PC-3 (cell line): ENCODE measurements at regions of chr2 and their contacts with region 1.

Region 1: GRCh38 chr2:179410552-179411356 is 146.1 kb upstream of the SESTD1 start:
- DNase-seq: peak; percentile 80
- ATAC-seq: peak; percentile 69
- H3K4me3 ChIP-seq: no peak overlapping the region
- H3K27ac ChIP-seq: no peak overlapping the region
- H3K4me1 ChIP-seq: peaks cover 10% of the 10 kb centered on the region; the same call in 1 of the 2 replicates
- H3K27me3 ChIP-seq: no peaks in the 10 kb centered on the region
- CTCF ChIP-seq: peak; percentile 85

Region 2: GRCh38 chr2:179226203-179226960 is 184.4 kb before region 1 on chr2:
- CTCF ChIA-PET with region 1: no interaction called
- POLR2A ChIA-PET with region 1: no interaction called
- intact Hi-C with region 1: loop called (anchors 10 kb)
- DNase-seq: peak; percentile 44
- ATAC-seq: no peak
- H3K4me3 ChIP-seq: no peak overlapping the region
- H3K27ac ChIP-seq: no peak overlapping the region
- H3K4me1 ChIP-seq: peaks cover 13% of the 10 kb centered on the region
- H3K27me3 ChIP-seq: no peaks in the 10 kb centered on the region
- CTCF ChIP-seq: no peak

Region 3: GRCh38 chr2:179354739-179355537 is 55.8 kb before region 1 on chr2:
- CTCF ChIA-PET with region 1: no interaction called
- POLR2A ChIA-PET with region 1: no interaction called
- intact Hi-C with region 1: loop called (anchors 5 kb)
- DNase-seq: peak; percentile 44
- ATAC-seq: no peak
- H3K4me3 ChIP-seq: no peak overlapping the region
- H3K27ac ChIP-seq: no peak overlapping the region
- H3K4me1 ChIP-seq: no peaks in the 10 kb centered on the region
- H3K27me3 ChIP-seq: no peaks in the 10 kb centered on the region
- CTCF ChIP-seq: peak; percentile 73

Region 4: GRCh38 chr2:179376881-179377280 is 33.9 kb before region 1 on chr2:
- CTCF ChIA-PET with region 1: no interaction called
- POLR2A ChIA-PET with region 1: no interaction called
- intact Hi-C with region 1: no loop called
- DNase-seq: no peak
- ATAC-seq: no peak
- H3K4me3 ChIP-seq: no peak overlapping the region
- H3K27ac ChIP-seq: no peak overlapping the region
- H3K4me1 ChIP-seq: peaks cover 14% of the 10 kb centered on the region
- H3K27me3 ChIP-seq: no peaks in the 10 kb centered on the region
- CTCF ChIP-seq: no peak

Region 5: DNA sequence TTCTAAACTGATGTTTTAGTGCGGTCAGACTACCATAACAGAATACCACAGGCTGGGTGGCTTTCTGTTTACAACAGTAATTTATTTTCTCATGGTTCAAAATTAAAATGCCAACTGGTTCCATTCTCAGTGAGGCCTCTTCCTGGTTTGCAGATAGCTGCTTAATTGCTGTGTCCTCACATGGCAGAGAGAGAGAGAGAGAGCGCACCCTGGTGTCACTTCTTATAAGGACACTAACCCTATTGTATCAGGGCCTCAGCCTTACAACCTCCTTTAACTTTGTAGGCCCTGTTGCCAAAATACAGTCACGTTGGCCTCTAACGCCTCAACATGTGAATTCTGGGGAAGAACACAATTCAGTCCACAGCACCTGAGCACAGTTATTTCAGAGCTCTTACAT is 488.1 kb after region 1 on chr2:
- CTCF ChIA-PET with region 1: interaction called, 3 read pairs
- POLR2A ChIA-PET with region 1: no interaction called
- intact Hi-C with region 1: loop called (anchors 5 kb)
- DNase-seq: peak; percentile 79
- ATAC-seq: peak; percentile 93
- H3K4me3 ChIP-seq: no peak overlapping the region
- H3K27ac ChIP-seq: no peak overlapping the region
- H3K4me1 ChIP-seq: no peaks in the 10 kb centered on the region
- H3K27me3 ChIP-seq: no peaks in the 10 kb centered on the region
- CTCF ChIP-seq: peak; percentile 78